Posterior vena cava (tissue), 2 donors: ENCODE measurements at regions of chr7 and their contacts with region 1.

Region 1: GRCh38 chr7:111474723-111475418 is 87.4 kb downstream of the IMMP2L start:
- DNase-seq: no peak

Region 2: DNA sequence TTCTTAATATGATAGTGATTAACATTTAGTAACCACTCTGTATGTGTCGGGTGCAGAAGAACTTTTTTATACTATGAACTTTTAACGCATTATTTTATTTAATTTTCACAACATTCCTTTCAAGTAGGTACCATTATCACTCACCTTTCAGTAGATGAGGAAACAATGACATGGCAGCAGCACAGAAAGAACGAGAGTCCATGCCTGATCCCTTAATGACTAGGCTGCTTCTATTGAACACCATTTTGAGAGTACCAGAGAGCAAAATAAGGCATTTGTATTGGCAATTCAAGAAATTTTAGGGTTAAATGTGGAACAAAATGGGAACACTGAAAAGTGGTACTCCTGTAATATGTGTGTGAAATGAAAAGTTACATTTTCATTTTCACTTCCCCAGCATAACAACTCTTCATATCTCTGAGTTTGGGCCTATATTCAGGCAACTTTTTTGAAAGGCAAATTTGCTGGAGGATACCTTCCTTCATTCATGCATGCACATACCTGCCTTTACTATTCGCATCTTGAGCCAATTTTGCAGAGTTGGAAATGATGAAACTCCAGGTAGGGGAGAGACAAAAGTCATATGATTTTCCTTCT is 371.1 kb before region 1 on chr7:
- intact Hi-C with region 1: loop called in 1 of 2 experiments (anchors 10 kb)
- DNase-seq: no peak

Region 3: DNA sequence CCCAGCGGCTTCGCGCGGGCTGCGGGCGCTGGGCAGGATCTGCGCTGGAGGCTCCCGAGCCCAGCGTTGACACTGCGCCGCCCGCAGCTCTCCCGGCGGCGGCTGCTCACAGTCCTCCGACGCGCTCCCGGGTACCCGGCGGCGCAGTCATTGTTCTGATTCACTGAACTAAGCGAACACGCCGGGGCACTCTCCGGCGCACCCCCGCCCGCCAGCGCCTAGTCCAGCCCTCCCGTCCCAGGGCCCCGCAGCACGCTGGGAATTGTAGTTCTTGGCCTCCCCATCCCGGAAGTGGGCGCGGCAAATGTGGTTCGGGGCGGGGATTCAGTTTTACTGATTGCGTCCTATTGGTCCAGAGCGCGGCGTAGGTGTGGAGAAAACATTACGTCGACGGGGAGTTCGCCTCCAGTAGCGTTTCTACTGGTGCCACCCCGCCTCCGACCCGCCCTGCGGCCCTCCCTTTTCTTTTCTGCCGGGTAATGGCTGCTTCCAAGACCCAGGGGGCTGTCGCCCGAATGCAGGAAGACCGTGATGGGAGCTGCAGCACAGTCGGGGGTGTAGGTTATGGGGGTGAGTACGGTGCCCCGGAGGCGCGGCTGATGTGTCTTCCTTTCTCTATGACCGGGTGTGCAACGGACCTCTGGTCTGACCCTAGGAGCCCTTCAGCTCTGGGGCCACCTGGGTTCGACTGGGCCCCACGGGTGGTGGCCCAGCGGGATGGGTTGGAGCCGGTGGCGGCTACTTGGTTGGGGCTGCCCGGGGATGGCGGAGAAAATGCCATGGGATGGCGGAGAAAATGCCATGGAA is 731.6 kb after region 1 on chr7 and contains the starts of genes DOCK4 and ZNF277:
- intact Hi-C with region 1: no loop called
- DNase-seq: peak; percentile 100
- total RNA-seq, gene DOCK4: 26.1 TPM
- total RNA-seq, gene ZNF277: 15.0 to 19.8 TPM